ENCODE measurements at regions of chr1 and their contacts with region 1.

Region 1: DNA sequence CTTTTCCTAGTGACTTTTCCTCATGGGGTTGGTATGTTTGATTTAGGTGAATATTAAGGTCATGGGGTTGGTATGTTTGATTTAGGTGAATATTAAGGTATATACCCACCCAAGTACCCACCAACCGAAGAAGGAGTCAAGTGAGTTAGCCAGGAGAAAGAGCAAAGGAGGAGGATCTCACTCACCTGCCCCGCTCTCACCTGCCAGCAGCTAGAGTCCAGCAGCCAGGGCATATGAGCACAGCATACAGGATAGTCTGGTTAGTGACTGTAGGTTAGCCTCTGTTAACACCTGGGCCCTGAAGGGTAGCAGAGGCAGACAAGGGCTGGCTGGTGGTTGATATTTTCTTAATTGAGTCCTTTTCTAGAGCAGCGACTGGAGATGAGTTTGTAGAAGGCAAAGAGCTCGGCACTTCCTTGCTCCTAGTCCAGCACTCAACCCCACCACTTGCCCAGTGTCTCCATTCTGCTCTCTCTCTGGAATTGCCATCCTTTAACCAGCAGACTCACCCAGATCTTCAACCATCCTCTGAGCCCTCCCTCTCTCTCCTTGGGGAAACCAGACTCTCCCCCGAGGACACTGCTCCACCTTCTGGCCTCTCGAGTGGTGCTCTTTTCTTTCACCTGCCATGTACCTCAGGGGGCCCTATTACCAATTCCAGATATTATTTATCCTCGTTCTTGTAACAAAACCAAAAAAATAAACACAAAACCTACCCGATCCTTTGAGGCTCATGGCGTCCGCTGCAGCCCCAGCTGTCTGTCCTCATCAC is 16.3 kb upstream of the DESI2 start:
- DNase-seq: no peak
- H3K4me3 ChIP-seq: no peak overlapping the region
- H3K4me3 Mint-ChIP-seq: no peak overlapping the region
- H3K27ac Mint-ChIP-seq: no peak overlapping the region
- H3K4me1 ChIP-seq: no peaks in the 10 kb centered on the region
- H3K4me1 Mint-ChIP-seq: no peaks in the 10 kb centered on the region
- H3K27me3 ChIP-seq: no peaks in the 10 kb centered on the region
- H3K27me3 Mint-ChIP-seq: no peaks in the 10 kb centered on the region
- CTCF ChIP-seq: peak in 1 of 2 experiments; percentile 34

Region 2: DNA sequence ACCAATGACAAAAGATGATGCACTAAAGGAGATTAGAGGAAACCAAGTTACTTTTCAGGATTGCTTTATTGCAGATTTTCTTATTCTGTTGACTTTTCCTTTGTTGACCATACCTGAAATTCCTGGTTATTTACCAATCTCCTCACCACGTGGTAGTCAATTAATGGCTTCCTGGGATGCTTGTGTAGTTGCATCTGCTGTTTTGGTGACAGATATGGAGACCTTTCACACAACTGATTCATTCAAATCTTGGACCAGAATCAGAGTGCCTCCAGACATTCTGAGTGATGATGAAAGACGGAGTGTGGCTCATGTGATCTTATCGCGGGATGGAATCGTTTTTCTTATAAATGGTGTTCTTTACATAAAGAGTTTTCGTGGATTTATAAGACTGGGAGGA is 84.3 kb before region 1 on chr1:
- CTCF ChIA-PET with region 1: no interaction called
- POLR2A ChIA-PET with region 1: no interaction called
- intact Hi-C with region 1: no loop called
- DNase-seq: peak in 1 of 2 experiments; percentile 43
- H3K4me3 ChIP-seq: no peak overlapping the region
- H3K4me3 Mint-ChIP-seq: no peak overlapping the region
- H3K27ac Mint-ChIP-seq: peak overlapping the region; percentile 13
- H3K4me1 ChIP-seq: peaks cover 10% of the 10 kb centered on the region
- H3K4me1 Mint-ChIP-seq: peaks cover 13% of the 10 kb centered on the region
- H3K27me3 ChIP-seq: no peaks in the 10 kb centered on the region
- H3K27me3 Mint-ChIP-seq: no peaks in the 10 kb centered on the region
- CTCF ChIP-seq: no peak

Region 3: DNA sequence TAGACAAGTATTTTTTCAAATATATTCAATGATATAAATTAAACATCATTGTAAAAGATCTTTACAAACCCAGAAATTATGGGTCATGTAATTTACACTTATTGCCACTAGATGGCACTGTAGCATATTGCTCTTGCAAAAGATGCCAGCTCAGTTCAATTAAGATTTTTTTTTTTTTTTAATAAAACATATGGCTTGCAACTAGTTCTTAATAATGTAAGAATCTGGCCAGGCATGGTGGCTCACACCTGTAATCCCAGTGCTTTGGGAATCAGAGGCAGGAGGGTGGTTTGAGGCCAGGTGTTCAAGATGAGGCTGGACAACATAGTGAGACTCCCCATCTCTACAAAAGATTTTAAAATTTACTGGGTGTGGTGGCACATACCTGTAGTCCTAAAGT is 33.2 kb before region 1 on chr1:
- CTCF ChIA-PET with region 1: no interaction called
- POLR2A ChIA-PET with region 1: no interaction called
- intact Hi-C with region 1: loop called (anchors 2 kb)
- DNase-seq: peak in 1 of 2 experiments; percentile 26
- H3K4me3 ChIP-seq: no peak overlapping the region
- H3K4me3 Mint-ChIP-seq: no peak overlapping the region
- H3K27ac Mint-ChIP-seq: no peak overlapping the region
- H3K4me1 ChIP-seq: no peaks in the 10 kb centered on the region
- H3K4me1 Mint-ChIP-seq: no peaks in the 10 kb centered on the region
- H3K27me3 ChIP-seq: no peaks in the 10 kb centered on the region
- H3K27me3 Mint-ChIP-seq: no peaks in the 10 kb centered on the region
- CTCF ChIP-seq: peak; percentile 60 to 81